Ovary (tissue), 10 donors: ENCODE measurements at regions of chr7 and their contacts with region 1.

Region 1: DNA sequence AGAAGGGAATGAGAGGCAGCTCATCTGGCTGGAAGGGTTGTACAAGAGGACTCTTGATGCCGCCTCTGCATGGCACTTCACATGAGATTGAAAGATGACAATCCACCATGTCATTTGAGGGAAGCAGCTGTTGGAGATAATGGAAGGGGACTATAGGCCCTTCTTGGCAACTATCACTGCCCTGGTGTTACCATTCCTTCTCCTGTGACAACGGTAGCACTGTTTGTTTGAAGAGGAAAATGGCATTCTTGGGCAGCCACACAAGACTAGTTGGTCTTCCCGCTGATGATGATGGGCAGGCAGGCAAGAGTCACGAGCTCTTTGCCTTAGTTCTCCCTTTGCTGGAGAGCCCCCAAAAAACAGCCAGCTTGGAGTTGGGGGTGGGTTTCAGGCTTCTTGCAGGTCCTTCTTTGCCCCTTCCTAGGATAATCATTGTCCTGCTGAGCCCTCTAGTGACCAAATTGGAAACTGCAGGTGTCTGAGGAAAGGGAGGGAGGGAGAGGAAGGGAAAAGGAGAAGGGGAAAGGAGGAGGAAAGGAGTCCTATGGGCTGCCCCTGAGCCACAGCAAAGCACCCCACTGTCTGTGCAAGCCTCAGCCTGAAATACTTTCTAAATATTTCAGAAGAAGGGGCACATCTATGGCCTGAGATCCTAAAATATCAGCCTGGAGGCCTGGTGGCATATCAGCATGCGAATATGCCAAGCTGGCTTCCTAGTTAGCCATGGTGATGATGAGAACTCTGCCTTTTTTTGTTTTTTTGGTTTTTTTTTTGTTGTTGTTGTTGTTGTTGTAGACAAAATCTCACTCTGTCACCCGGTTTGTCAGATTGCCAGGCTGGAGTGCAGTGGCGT is 165.6 kb upstream of the KMT2E start:
- DNase-seq: peak in 4 of 5 donors; percentile 15 to 41 (median 32)
- H3K4me3 ChIP-seq: no peak overlapping the region
- H3K27ac ChIP-seq: no peak overlapping the region
- H3K4me1 ChIP-seq: no peaks in the 10 kb centered on the region
- H3K27me3 ChIP-seq: no peaks in the 10 kb centered on the region
- CTCF ChIP-seq: peak in 1 of 3 donors; percentile 40
- EP300 ChIP-seq: no peak
- POLR2A ChIP-seq: no peak

Region 2: GRCh38 chr7:104231054-104232046 is 617.0 kb before region 1 on chr7:
- intact Hi-C with region 1: loop called in 1 of 4 experiments (anchors 5 kb)
- DNase-seq: peak in 4 of 5 donors; percentile 10 to 37 (median 23)
- H3K4me3 ChIP-seq: no peak overlapping the region
- H3K27ac ChIP-seq: no peak overlapping the region
- H3K4me1 ChIP-seq: no peaks in the 10 kb centered on the region
- H3K27me3 ChIP-seq: no peaks in the 10 kb centered on the region
- CTCF ChIP-seq: peak; percentile 26 to 44 (median 34)
- EP300 ChIP-seq: no peak
- POLR2A ChIP-seq: no peak

Region 3: DNA sequence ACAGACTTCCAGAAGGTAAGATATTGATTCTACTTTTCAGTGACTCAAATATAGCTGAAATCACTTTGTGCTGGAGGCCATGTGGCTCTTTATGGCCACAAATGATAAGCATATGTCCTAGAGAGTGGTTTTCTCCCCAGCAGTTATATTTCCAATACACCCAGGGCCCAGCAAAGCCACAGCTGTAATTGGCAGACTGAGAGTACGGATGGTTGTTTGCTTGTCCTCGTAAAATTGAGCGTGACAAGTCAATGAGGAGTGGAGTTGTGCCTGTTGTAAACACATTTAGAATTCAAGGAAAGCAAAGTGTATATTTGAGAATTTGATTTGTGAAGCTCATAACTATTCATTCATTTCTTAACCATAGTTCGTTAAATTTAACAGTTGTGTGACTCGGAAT is 318.1 kb before region 1 on chr7:
- intact Hi-C with region 1: no loop called
- DNase-seq: no peak
- H3K4me3 ChIP-seq: no peak overlapping the region
- H3K27ac ChIP-seq: no peak overlapping the region
- H3K4me1 ChIP-seq: no peaks in the 10 kb centered on the region
- H3K27me3 ChIP-seq: no peaks in the 10 kb centered on the region
- CTCF ChIP-seq: no peak
- EP300 ChIP-seq: no peak
- POLR2A ChIP-seq: no peak

Region 4: GRCh38 chr7:105376908-105377533 is 528.7 kb after region 1 on chr7:
- intact Hi-C with region 1: no loop called
- DNase-seq: no peak
- H3K4me3 ChIP-seq: no peak overlapping the region
- H3K27ac ChIP-seq: no peak overlapping the region
- H3K4me1 ChIP-seq: peaks cover 7% of the 10 kb centered on the region
- H3K27me3 ChIP-seq: no peaks in the 10 kb centered on the region
- CTCF ChIP-seq: no peak
- EP300 ChIP-seq: no peak
- POLR2A ChIP-seq: no peak

Region 5: DNA sequence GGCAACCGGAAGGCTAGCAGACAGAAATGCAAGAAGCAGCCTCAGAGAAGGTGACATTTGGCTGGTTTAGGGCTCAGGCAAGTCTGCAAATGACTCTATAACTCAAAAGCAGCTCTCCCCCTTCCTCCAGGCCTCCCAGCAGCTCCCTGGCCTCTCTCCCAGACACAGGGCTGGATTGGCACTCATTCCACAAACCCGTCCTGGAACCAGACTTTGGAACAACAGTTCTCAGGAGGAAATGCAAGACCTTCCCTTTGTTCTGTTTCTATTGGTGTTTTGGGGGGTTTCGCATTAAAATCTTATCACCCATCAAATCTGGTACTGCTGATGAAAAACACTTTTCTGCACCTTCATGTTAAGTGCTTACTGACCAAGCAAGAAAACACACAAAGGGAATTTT is 773.3 kb after region 1 on chr7:
- intact Hi-C with region 1: no loop called
- DNase-seq: peak; percentile 39 to 63 (median 61)
- H3K4me3 ChIP-seq: no peak overlapping the region
- H3K27ac ChIP-seq: no peak overlapping the region
- H3K4me1 ChIP-seq: no peaks in the 10 kb centered on the region
- H3K27me3 ChIP-seq: no peaks in the 10 kb centered on the region
- CTCF ChIP-seq: no peak
- EP300 ChIP-seq: no peak
- POLR2A ChIP-seq: no peak